CD4-positive, alpha-beta memory T cell (primary cell): ENCODE measurements at regions of chr14 and their contacts with region 1.

Region 1: DNA sequence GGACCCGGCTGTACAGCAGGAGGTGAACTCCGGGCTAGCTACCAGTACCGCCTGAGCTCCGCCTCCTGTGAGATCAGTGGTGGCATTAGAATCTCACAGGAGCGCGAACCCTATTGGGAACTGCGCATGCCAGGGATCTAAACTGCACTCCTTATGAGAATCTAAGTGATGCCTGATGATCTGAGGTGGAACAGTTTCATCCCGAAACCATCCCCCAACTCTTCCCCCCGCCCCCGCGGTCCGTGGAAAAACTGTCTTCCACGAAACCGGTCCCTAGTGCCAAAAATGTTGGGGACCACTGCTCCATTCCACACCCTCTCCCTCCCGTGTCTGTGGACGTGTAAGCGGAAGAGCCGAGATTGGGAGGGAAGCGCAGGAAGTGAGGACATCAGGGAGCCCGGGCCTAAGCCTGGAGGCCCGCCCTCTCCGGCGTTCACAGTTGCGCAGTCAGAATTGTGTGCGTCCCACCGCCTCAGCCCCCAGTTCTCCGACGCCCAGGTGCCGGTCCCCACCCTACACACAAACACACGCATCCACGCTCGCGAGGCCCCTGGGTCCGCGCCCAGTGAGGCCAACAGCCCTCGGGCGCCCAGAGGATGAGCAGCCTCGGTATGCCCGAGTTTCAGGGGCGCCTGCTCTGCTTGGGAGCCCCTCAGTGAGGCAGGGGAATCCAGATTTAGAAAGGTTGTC is 1.8 kb upstream of the RNASE4 start:
- DNase-seq: peak; percentile 80 to 85 (median 82)
- H3K4me3 ChIP-seq: peak overlapping the region; percentile 75 to 88
- H3K4me3 Mint-ChIP-seq: no peak overlapping the region
- H3K27ac ChIP-seq: peak overlapping the region; percentile 91
- H3K27ac Mint-ChIP-seq: no peak overlapping the region
- H3K4me1 ChIP-seq: peaks cover 35% of the 10 kb centered on the region
- H3K4me1 Mint-ChIP-seq: peaks cover 9 to 23% (median 16%) of the 10 kb centered on the region in 4 donors
- H3K27me3 ChIP-seq: no peaks in the 10 kb centered on the region
- H3K27me3 Mint-ChIP-seq: peaks cover 0 to 8% of the 10 kb centered on the region in 2 donors

Region 2: GRCh38 chr14:20332788-20333493 is 349.6 kb before region 1 on chr14 and contains the start of gene CCNB1IP1:
- CTCF ChIA-PET with region 1: interaction called, 20 read pairs
- POLR2A ChIA-PET with region 1: interaction called, 28 read pairs
- intact Hi-C with region 1: no loop called
- DNase-seq: peak; percentile 73 to 84 (median 73)
- H3K4me3 ChIP-seq: peak within 1 kb of the TSS; percentile 62 to 67
- H3K4me3 Mint-ChIP-seq: peak within 1 kb of the TSS; percentile 99 to 100 (median 99)
- H3K27ac ChIP-seq: peak within 1 kb of the TSS; percentile 67
- H3K27ac Mint-ChIP-seq: peak within 1 kb of the TSS; percentile 86 to 98 (median 98)
- H3K4me1 ChIP-seq: peaks cover 16% of the 10 kb centered on the region
- H3K4me1 Mint-ChIP-seq: peaks cover 20 to 41% (median 24%) of the 10 kb centered on the region in 4 donors
- H3K27me3 ChIP-seq: no peaks in the 10 kb centered on the region
- H3K27me3 Mint-ChIP-seq: no peaks in the 10 kb centered on the region
- total RNA-seq, gene CCNB1IP1: 21.2 to 24.3 TPM

Region 3: GRCh38 chr14:20454516-20455354 is 227.8 kb before region 1 on chr14 and contains the starts of genes APEX1 and OSGEP:
- CTCF ChIA-PET with region 1: no interaction called
- POLR2A ChIA-PET with region 1: interaction called, 12 read pairs
- intact Hi-C with region 1: loop called (anchors 1 kb)
- DNase-seq: peak; percentile 96 to 99 (median 98)
- H3K4me3 ChIP-seq: peak within 1 kb of the TSS; percentile 70 to 99
- H3K4me3 Mint-ChIP-seq: peak within 1 kb of the TSS in 2 of 8 donors; percentile 13 to 23
- H3K27ac ChIP-seq: peak within 1 kb of the TSS; percentile 89
- H3K27ac Mint-ChIP-seq: peak within 1 kb of the TSS in 2 of 7 donors; percentile 19 to 55
- H3K4me1 ChIP-seq: peaks cover 53% of the 10 kb centered on the region
- H3K4me1 Mint-ChIP-seq: peaks cover 5 to 21% (median 12%) of the 10 kb centered on the region in 4 donors
- H3K27me3 ChIP-seq: no peaks in the 10 kb centered on the region
- H3K27me3 Mint-ChIP-seq: no peaks in the 10 kb centered on the region
- total RNA-seq, gene APEX1: 102 to 105 TPM
- total RNA-seq, gene OSGEP: 72.3 to 75.9 TPM

Region 4: GRCh38 chr14:20613094-20614037 is 69.2 kb before region 1 on chr14:
- CTCF ChIA-PET with region 1: interaction called, 35 read pairs
- POLR2A ChIA-PET with region 1: interaction called, 85 read pairs
- intact Hi-C with region 1: loop called (anchors 1 kb)
- DNase-seq: peak; percentile 88 to 94 (median 93)
- H3K4me3 ChIP-seq: peak overlapping the region; percentile 39 to 66
- H3K4me3 Mint-ChIP-seq: no peak overlapping the region
- H3K27ac ChIP-seq: peak overlapping the region; percentile 13
- H3K27ac Mint-ChIP-seq: no peak overlapping the region
- H3K4me1 ChIP-seq: peaks cover 44% of the 10 kb centered on the region
- H3K4me1 Mint-ChIP-seq: peaks cover 0 to 5% (median 3%) of the 10 kb centered on the region in 4 donors
- H3K27me3 ChIP-seq: no peaks in the 10 kb centered on the region
- H3K27me3 Mint-ChIP-seq: peaks cover 1 to 4% of the 10 kb centered on the region in 2 donors

Region 5: DNA sequence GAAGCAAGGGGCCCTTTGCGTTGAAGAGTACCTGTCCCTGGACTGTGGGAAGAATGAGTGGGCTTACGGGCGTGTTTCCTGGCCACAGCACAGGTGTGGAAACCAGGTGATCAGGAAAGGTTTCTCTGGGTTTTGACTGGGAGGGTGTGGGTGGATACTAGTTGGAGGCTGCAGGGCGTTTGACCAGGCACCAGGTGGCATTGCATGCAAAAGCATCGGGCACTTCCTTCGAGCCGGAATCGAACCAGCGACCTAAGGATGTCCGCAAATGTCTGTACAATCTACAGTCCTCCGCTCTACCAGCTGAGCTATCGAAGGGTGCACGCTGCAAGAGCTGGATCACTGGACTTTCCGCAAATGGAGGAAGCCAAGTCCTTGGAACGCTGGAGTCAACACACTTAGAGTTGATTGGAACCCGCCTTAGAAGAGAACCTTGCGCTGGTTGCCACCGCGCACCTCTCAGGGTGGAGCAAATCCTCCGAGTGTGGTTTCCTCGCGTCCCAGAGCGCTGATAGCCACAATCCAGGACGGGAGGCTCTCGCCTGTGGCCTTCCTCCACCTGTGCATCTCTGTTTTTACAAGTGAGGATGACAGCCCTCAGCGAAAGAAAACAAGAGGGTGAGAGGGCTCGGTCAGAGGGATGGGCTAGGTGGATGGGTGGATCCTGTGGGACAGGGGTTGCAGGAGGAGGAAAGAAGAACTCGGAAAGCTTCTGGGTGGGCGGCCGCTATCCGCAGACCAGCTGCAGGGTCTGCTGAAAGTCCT is 19.4 kb before region 1 on chr14:
- CTCF ChIA-PET with region 1: interaction called, 349 read pairs
- POLR2A ChIA-PET with region 1: interaction called, 70 read pairs
- intact Hi-C with region 1: loop called (anchors 1 kb)
- DNase-seq: peak; percentile 74 to 78 (median 77)
- H3K4me3 ChIP-seq: peak overlapping the region; percentile 43 to 54
- H3K4me3 Mint-ChIP-seq: peak overlapping the region; percentile 78 to 88 (median 81)
- H3K27ac ChIP-seq: no peak overlapping the region
- H3K27ac Mint-ChIP-seq: peak overlapping the region in 6 of 7 donors; percentile 0 to 82 (median 50)
- H3K4me1 ChIP-seq: peaks cover 28% of the 10 kb centered on the region
- H3K4me1 Mint-ChIP-seq: peaks cover 18 to 38% (median 24%) of the 10 kb centered on the region in 4 donors
- H3K27me3 ChIP-seq: no peaks in the 10 kb centered on the region
- H3K27me3 Mint-ChIP-seq: peaks cover 5 to 6% of the 10 kb centered on the region in 2 donors

Region 6: DNA sequence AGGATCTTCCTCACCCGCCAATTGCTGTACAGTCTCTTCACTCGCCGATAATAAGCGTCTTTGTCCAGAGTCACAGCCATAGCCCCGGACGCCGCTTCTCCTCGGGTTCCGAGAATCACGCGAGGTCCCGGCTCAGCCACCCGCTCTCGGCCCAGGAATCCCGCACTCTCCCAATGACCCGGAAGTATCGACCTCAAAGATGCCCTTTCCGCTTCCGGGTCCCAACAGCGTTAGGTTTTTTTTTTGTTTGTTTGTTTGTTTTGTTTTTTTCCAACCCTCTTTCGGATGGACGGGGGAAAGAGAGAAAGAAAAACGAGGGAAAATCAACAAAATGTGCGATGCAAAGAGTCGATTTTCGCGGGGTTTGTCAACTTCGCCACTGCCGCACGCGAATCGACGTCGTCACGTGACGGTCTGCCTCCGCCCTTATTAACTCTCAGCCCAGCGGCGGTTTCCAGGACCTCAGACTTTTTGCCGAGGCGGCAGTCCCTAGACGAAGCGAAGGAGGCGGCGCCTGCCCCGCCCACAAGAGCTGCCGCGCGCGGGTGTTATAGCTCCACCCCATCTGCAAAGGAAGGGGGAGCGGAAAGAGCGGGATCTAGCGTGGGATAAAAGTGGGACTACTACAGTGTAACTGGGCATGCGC is 701.4 kb after region 1 on chr14 and contains the start of gene SUPT16H:
- CTCF ChIA-PET with region 1: no interaction called
- POLR2A ChIA-PET with region 1: no interaction called
- intact Hi-C with region 1: loop called (anchors 5 kb)
- DNase-seq: peak; percentile 91 to 96 (median 93)
- H3K4me3 ChIP-seq: peak within 1 kb of the TSS; percentile 98 to 99
- H3K4me3 Mint-ChIP-seq: peak within 1 kb of the TSS; percentile 95 to 100 (median 97)
- H3K27ac ChIP-seq: peak within 1 kb of the TSS; percentile 82
- H3K27ac Mint-ChIP-seq: peak within 1 kb of the TSS; percentile 96 to 100 (median 99)
- H3K4me1 ChIP-seq: peaks cover 47% of the 10 kb centered on the region
- H3K4me1 Mint-ChIP-seq: peaks cover 25 to 53% (median 38%) of the 10 kb centered on the region in 4 donors
- H3K27me3 ChIP-seq: no peaks in the 10 kb centered on the region
- H3K27me3 Mint-ChIP-seq: no peaks in the 10 kb centered on the region
- total RNA-seq, gene SUPT16H: 84.5 to 87.2 TPM